ENCODE measurements at regions of chr18 and their contacts with region 1.

Region 1: DNA sequence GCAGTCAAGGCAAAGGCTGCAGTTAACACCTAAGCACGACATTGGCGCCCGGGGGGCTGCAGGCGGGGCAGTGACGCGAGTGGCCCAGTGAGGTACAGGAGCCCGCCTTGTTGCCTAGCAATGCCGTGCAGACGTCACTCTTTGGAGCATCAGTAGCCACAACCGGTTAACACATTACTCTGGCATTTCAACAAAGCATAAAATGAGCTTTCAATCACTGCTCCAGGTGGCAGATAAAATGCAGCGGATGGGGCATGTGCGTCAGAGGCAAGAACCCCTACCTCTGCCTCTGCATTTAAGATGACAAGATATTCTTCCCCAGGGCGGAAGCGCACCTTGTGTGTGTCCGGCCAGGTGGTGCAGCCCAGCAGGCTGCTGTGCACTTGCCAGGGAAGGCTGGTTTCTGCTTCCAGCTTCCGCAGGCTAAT is 139.4 kb downstream of the MTCL1 start:
- DNase-seq: peak in 2 of 35 experiments; percentile 1 to 2
- ATAC-seq: no peak
- H3K4me3 ChIP-seq: no peak overlapping the region
- H3K4me3 Mint-ChIP-seq: no peak overlapping the region
- H3K27ac ChIP-seq: no peak overlapping the region
- H3K27ac Mint-ChIP-seq: no peak overlapping the region
- H3K4me1 ChIP-seq: no peaks in the 10 kb centered on the region
- H3K4me1 Mint-ChIP-seq: no peaks in the 10 kb centered on the region
- H3K27me3 ChIP-seq: peaks cover 0 to 7% of the 10 kb centered on the region in 2 experiments
- H3K27me3 Mint-ChIP-seq: peaks cover 10 to 22% of the 10 kb centered on the region in 2 donors

Region 2: GRCh38 chr18:8742387-8743361 is 102.1 kb before region 1 on chr18:
- CTCF ChIA-PET with region 1: no interaction called
- POLR2A ChIA-PET with region 1: interaction called in 1 of 2 experiments, 10 read pairs
- DNase-seq: peak in 32 of 35 experiments; percentile 4 to 73 (median 40)
- ATAC-seq: peak in 3 of 4 experiments; percentile 43 to 80 (median 49)
- H3K4me3 ChIP-seq: no peak overlapping the region
- H3K4me3 Mint-ChIP-seq: peak overlapping the region in 1 of 3 donors; percentile 70
- H3K27ac ChIP-seq: peak overlapping the region; percentile 17
- H3K27ac Mint-ChIP-seq: peak overlapping the region in 1 of 2 donors; percentile 23
- H3K4me1 ChIP-seq: peaks cover 27 to 34% of the 10 kb centered on the region in 2 experiments
- H3K4me1 Mint-ChIP-seq: peaks cover 42 to 47% (median 44%) of the 10 kb centered on the region in 3 donors
- H3K27me3 ChIP-seq: no peaks in the 10 kb centered on the region
- H3K27me3 Mint-ChIP-seq: peaks cover 0 to 1% of the 10 kb centered on the region in 2 donors

Region 3: DNA sequence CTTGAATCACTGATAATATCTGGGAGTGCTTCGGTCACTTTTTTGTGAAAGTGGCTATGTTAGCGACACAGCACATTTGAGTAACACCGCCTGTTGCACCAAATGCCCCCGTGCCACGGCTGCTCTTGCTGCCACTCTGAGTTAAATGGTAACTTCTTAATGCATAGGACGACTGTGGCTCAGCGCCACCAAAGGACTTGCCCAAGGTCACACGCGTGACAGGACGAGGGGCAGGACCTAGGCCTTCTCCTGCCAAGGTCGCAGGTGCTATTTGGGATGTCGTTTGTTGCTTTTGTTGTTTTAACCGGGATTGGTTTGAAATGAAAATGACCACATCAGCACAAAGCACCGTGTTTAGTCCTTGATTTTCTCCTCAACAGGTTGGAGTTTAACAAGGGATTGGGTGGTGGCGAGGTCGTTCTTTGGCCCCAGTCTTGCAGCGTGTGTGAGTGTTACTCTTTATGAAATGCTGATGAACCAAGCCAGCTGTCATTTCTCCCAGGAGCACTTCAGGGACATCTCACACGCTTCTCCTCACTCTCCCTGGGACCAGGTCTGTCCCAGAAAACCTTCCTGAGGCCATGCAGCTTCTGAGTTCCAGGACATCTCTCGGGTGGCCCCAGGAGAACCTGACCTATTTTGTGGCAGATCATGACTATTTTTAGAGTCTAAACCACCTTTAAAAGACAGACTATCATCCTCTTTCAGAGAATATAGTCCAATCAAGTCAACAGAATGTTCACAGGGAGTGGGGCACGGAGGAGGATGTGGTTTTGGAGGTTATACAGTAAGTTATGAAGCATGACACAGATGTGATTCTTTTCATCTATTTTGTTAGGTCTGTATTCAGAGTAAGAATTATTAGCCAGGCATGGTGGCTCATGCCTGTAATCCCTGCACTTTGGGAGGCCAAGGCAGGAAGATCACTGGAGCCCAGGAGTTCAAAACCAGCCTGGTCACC is 89.5 kb before region 1 on chr18:
- CTCF ChIA-PET with region 1: no interaction called
- POLR2A ChIA-PET with region 1: no interaction called
- DNase-seq: peak; percentile 14 to 78 (median 61)
- ATAC-seq: peak; percentile 95 to 100 (median 100)
- H3K4me3 ChIP-seq: peak overlapping the region; percentile 9 to 40
- H3K4me3 Mint-ChIP-seq: peak overlapping the region; percentile 61 to 67 (median 65)
- H3K27ac ChIP-seq: peak overlapping the region; percentile 31
- H3K27ac Mint-ChIP-seq: peak overlapping the region; percentile 56 to 69
- H3K4me1 ChIP-seq: peaks cover 25% of the 10 kb centered on the region in 2 experiments
- H3K4me1 Mint-ChIP-seq: peaks cover 34 to 44% (median 41%) of the 10 kb centered on the region in 3 donors
- H3K27me3 ChIP-seq: peaks cover 0 to 7% of the 10 kb centered on the region in 2 experiments
- H3K27me3 Mint-ChIP-seq: peaks cover 2 to 12% of the 10 kb centered on the region in 2 donors

Region 4: GRCh38 chr18:8830067-8831060 is 14.4 kb before region 1 on chr18:
- CTCF ChIA-PET with region 1: no interaction called
- POLR2A ChIA-PET with region 1: no interaction called
- DNase-seq: no peak
- ATAC-seq: no peak
- H3K4me3 ChIP-seq: no peak overlapping the region
- H3K4me3 Mint-ChIP-seq: no peak overlapping the region
- H3K27ac ChIP-seq: no peak overlapping the region
- H3K27ac Mint-ChIP-seq: no peak overlapping the region
- H3K4me1 ChIP-seq: no peaks in the 10 kb centered on the region
- H3K4me1 Mint-ChIP-seq: no peaks in the 10 kb centered on the region
- H3K27me3 ChIP-seq: peaks cover 0 to 10% of the 10 kb centered on the region in 2 experiments
- H3K27me3 Mint-ChIP-seq: peaks cover 2 to 20% of the 10 kb centered on the region in 2 donors

Region 5: GRCh38 chr18:8860845-8861642 is 16.3 kb after region 1 on chr18:
- CTCF ChIA-PET with region 1: no interaction called
- POLR2A ChIA-PET with region 1: no interaction called
- DNase-seq: no peak
- ATAC-seq: no peak
- H3K4me3 ChIP-seq: no peak overlapping the region
- H3K4me3 Mint-ChIP-seq: no peak overlapping the region
- H3K27ac ChIP-seq: no peak overlapping the region
- H3K27ac Mint-ChIP-seq: no peak overlapping the region
- H3K4me1 ChIP-seq: no peaks in the 10 kb centered on the region
- H3K4me1 Mint-ChIP-seq: no peaks in the 10 kb centered on the region
- H3K27me3 ChIP-seq: peaks cover 0 to 2% of the 10 kb centered on the region in 2 experiments
- H3K27me3 Mint-ChIP-seq: peaks cover 3 to 5% of the 10 kb centered on the region in 2 donors